Common myeloid progenitor, CD34-positive (primary cell): ENCODE measurements at regions of chr6 and their contacts with region 1.

Region 1: DNA sequence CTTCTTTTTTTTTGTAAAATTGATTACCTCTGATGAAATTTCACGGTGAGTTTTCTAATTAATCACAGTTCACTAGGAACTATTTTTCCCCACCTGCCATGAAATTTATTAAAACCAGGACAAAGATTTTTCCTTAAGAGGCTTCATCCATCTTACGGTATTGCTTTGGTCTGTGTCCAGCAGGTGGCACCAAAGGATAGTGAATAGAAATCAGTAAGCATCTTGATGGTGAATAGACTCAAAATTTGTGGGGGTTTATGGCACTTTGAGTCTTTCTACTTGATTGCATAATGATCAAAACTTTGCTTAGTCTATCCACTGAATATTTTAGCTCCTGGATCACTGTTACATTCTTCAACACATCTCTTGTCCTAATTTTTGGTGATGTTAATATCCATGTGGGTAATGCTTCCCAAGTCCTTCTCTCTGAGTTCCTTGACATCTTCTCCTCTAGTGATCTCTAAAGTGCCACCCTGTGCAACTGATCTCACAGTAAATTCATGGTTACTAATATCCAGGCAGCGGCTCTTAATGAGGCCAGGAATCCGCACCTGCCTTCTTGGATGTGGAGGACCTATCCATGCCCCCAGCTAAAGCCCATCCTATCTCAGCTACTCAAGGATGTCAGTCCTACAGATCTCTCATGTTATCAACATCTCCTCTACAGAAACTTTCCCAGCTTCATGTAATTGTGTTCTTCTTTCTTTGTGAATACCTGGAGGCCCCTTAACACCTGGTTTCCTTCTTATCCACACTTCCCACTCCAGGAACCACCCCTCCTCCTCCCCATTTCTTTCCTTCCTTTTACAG is 54.5 kb downstream of the STMND1 start:
- DNase-seq: peak; percentile 82 to 90 (median 85)
- H3K4me3 ChIP-seq: no peak overlapping the region
- H3K27ac ChIP-seq: no peak overlapping the region
- H3K4me1 ChIP-seq: no peaks in the 10 kb centered on the region
- H3K27me3 ChIP-seq: peaks cover 0 to 2% (median 0%) of the 10 kb centered on the region in 5 experiments

Region 2: DNA sequence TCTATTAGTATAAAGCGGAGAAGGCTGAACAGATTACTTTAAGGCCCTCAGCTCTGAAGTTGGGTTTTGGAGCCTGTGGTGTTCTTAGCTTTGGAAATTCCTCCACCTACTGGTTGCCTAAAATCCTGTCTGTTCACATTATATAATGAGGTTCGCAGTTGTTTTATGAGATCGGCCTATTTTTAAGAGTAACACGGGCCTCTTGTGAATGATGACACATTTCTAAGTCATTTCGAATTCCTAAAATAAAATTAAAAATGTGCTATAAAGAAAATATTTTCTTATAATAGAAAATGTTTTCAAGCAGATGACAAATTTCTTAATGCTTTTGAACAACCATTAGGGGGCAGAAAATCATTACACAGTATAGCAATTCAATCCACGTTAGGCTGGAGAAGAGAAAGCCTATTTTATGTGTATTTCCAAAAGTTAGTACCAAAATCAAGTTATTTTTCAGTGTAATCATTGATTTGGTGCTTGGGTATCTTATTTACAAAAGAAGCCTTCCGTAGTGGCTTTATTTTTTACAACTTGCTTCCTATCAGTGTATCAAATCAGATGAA is 428.0 kb after region 1 on chr6:
- CTCF ChIA-PET with region 1: interaction called, 30 read pairs
- POLR2A ChIA-PET with region 1: no interaction called
- DNase-seq: peak; percentile 65 to 78 (median 74)
- H3K4me3 ChIP-seq: peak overlapping the region in 2 of 7 experiments; percentile 36 to 55
- H3K27ac ChIP-seq: no peak overlapping the region
- H3K4me1 ChIP-seq: peaks cover 0 to 9% (median 7%) of the 10 kb centered on the region in 4 experiments
- H3K27me3 ChIP-seq: peaks cover 0 to 5% (median 1%) of the 10 kb centered on the region in 5 experiments